Calu3 (cell line): ENCODE measurements at regions of chr6 and their contacts with region 1.

Region 1: DNA sequence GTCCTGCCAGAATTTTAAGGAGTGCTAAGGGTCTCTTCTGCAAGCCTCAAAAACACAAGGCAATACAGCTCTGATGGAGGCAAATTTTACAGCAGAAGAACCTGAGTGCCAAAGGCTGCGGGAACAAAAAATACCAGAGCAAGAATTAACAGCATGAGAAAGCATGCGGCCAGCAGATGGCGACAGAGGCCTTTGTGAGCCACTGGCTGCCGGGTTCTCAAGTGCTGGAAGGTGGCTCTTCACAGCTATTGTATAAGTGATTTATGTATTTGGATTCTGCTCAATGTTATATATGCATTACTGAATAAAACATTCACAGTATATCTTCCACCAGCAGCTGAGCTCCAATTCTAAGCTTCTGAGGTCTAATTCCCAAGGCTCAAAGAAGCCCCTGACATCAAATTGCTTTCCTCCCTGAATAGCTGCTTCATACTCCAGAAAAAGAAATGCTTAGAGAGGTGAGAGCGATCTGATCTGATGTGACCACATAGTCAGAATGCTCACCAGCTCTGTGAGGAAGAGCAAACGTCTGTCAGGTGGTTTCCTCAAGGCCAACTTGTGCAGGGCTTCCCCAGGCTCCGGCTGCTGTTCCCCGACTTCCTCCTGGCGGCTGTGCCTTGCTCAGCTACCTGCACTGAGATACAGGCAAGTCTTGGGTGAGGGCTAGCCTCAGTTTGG is 58.6 kb downstream of the PPP1R3G start:
- DNase-seq: peak; percentile 70
- H3K4me3 Mint-ChIP-seq: no peak overlapping the region
- H3K27ac Mint-ChIP-seq: no peak overlapping the region
- H3K4me1 Mint-ChIP-seq: no peaks in the 10 kb centered on the region
- H3K27me3 Mint-ChIP-seq: no peaks in the 10 kb centered on the region
- CTCF ChIP-seq: peak; percentile 53

Region 2: DNA sequence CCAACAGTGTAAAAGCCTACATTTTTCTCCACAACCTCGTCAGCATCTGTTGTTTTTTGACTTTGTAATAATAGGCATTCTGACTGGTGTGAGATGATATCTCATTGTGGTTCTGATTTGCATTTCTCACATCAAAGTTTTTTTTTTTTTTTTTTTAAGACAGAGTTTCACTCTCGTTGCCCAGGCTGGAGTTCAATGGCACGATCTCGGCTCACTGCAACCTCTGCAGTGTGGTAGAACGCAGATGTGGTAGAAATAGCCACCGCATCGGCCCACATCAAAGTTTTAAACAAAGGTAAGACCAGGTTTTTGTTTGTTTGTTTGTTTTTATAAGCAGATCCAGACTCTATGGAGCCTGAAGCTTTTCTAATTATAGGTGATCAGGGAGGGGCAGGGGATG is 71.3 kb before region 1 on chr6:
- CTCF ChIA-PET with region 1: no interaction called
- intact Hi-C with region 1: no loop called
- DNase-seq: no peak
- H3K4me3 Mint-ChIP-seq: no peak overlapping the region
- H3K27ac Mint-ChIP-seq: no peak overlapping the region
- H3K4me1 Mint-ChIP-seq: no peaks in the 10 kb centered on the region
- H3K27me3 Mint-ChIP-seq: no peaks in the 10 kb centered on the region
- CTCF ChIP-seq: no peak

Region 3: GRCh38 chr6:5302995-5303622 is 159.3 kb after region 1 on chr6:
- CTCF ChIA-PET with region 1: interaction called, 8 read pairs
- intact Hi-C with region 1: loop called (anchors 2 kb)
- DNase-seq: peak; percentile 51
- H3K4me3 Mint-ChIP-seq: no peak overlapping the region
- H3K27ac Mint-ChIP-seq: no peak overlapping the region
- H3K4me1 Mint-ChIP-seq: peaks cover 16% of the 10 kb centered on the region
- H3K27me3 Mint-ChIP-seq: no peaks in the 10 kb centered on the region
- CTCF ChIP-seq: peak; percentile 29

Region 4: DNA sequence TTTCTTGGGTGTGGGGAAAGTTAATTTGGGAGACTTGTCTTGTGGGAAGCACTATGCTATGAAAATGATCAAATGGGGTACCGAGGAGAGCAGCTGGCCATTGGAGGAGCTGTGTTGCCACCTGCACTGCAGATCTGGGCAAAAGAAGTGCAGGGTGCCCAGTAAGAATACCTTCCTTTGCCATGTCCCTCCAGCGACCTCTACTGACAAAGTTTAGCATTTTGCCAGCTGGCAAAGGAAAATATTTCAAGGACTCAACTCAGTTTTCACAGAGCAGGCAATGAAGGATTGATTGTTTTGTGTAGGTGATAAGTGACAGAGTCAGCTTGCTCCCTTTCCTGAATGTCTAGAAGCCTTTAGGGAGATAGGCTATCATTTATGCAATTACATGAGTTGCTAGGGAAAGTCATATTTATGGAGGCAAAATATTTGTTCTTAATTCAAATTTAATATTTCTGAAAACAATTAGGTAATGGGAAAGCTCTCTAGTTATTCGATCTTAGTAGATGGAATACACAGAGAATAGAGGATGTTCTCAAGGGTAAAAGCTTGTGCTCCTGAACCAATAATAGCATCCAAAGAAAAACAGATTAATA is 236.0 kb after region 1 on chr6:
- CTCF ChIA-PET with region 1: interaction called, 13 read pairs
- intact Hi-C with region 1: loop called (anchors 5 kb)
- DNase-seq: peak; percentile 41
- H3K4me3 Mint-ChIP-seq: no peak overlapping the region
- H3K27ac Mint-ChIP-seq: no peak overlapping the region
- H3K4me1 Mint-ChIP-seq: no peaks in the 10 kb centered on the region
- H3K27me3 Mint-ChIP-seq: no peaks in the 10 kb centered on the region
- CTCF ChIP-seq: peak; percentile 31

Region 5: DNA sequence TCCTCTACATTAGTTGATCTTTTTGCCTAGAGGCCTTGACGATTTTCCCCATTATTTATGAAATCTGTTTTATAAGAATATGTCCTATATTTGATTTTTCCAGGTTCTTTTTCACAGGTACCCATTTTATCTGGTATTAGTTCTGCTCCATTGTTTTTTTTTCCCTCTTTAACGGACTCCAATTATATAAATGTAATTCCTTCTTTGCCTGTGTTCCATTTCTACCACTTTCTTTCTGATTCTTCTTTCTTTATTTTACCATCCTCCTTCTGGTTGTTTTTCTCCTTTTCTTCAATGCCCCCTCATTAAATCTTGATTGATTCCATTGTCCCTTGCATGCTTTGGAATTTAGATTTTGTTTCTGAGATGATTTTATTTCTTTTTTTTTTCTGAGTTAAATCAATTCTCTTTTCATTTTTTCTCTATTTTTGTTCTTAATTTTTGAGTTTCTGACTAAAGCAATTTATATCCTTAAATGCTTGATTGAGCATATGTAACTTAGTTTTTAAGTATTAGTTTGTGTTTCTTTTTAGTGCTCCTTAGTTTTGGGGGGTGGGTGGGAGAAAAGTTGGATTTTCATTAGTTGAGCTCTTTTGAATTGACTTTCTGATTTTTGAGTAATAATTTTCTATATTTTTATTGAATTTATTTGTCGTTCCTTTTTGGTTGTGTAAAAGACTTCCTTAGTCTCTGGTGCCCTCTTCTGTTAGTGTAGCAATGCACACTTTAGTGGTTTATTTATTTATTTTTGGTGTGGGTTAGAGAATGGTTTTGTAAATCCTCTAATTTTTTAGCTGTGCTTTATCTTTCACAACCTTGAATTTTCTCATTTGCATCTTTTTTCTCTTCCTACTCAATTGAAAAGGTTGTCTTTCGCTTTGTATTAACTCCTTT is 258.3 kb after region 1 on chr6:
- CTCF ChIA-PET with region 1: interaction called, 3 read pairs
- intact Hi-C with region 1: loop called (anchors 2 kb)
- DNase-seq: no peak
- H3K4me3 Mint-ChIP-seq: no peak overlapping the region
- H3K27ac Mint-ChIP-seq: no peak overlapping the region
- H3K4me1 Mint-ChIP-seq: no peaks in the 10 kb centered on the region
- H3K27me3 Mint-ChIP-seq: no peaks in the 10 kb centered on the region
- CTCF ChIP-seq: peak; percentile 30